OCI-LY7 (cell line): ENCODE measurements at regions of chr5 and their contacts with region 1.

Region 1: GRCh38 chr5:151703227-151703626 is 16.5 kb upstream of the SPARC start:
- DNase-seq: no peak
- H3K4me3 ChIP-seq: no peak overlapping the region
- H3K27ac ChIP-seq: no peak overlapping the region
- H3K4me1 ChIP-seq: no peaks in the 10 kb centered on the region
- CTCF ChIP-seq: no peak

Region 2: GRCh38 chr5:151719228-151720000 is 16.2 kb after region 1 on chr5:
- CTCF ChIA-PET with region 1: interaction called, 4 read pairs
- POLR2A ChIA-PET with region 1: interaction called, 11 read pairs
- intact Hi-C with region 1: no loop called
- DNase-seq: peak; percentile 27
- H3K4me3 ChIP-seq: no peak overlapping the region
- H3K27ac ChIP-seq: no peak overlapping the region
- H3K4me1 ChIP-seq: no peaks in the 10 kb centered on the region
- CTCF ChIP-seq: peak; percentile 73

Region 3: GRCh38 chr5:151825445-151825844 is 122.2 kb after region 1 on chr5:
- CTCF ChIA-PET with region 1: no interaction called
- POLR2A ChIA-PET with region 1: no interaction called
- intact Hi-C with region 1: no loop called
- DNase-seq: peak; percentile 50
- H3K4me3 ChIP-seq: no peak overlapping the region
- H3K27ac ChIP-seq: no peak overlapping the region
- H3K4me1 ChIP-seq: no peaks in the 10 kb centered on the region
- CTCF ChIP-seq: peak; percentile 89